ENCODE measurements at regions of chr2 and their contacts with region 1.

Region 1: DNA sequence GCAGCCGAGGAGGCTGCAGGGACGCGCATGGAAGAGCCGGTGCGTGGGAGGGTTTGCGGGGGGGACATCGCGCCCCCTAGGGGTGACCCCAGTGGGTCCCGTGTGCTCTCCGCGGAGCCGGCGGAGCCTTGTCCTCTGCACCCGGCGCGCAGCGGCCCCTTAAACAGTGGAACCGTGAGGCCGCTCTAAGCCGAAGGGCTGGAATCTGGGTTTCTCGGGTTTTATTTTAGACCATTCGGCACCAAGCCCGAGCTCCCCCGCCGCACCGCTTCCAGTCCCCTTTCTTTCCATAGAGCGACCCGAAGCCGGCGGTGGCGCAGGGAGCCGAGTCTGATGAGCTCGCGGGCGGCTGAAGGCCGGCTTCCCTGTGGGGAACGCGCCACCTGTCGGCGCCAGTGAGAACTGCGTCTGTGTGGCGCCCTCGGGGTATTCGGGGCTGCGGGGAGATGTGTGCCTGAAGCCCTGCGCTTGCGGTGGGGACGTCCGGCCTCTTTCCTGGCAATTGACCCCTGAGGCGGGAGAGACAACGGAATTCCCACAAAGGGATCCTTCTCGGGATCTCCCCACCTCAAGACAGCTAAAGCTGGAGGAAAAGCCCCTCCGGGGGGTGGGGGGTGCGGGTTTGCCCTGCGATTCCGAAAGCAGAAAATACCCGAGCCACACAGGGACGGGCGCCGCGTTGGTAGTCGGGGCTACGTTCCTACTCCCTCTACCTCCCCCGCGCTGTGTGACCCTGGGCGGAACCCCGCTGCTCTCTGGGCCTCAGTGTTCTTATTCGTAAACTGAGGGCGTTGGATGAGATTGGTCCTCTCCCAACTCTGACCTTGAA is 8.2 kb upstream of the EN1 start:
- DNase-seq: peak; percentile 94
- ATAC-seq: peak; percentile 54
- H3K4me3 Mint-ChIP-seq: peak overlapping the region; percentile 59
- H3K27ac Mint-ChIP-seq: no peak overlapping the region
- H3K4me1 Mint-ChIP-seq: peaks cover 60% of the 10 kb centered on the region
- H3K27me3 Mint-ChIP-seq: peaks cover 100% of the 10 kb centered on the region
- CTCF ChIP-seq: peak; percentile 97

Region 2: GRCh38 chr2:118371515-118371914 is 484.1 kb before region 1 on chr2:
- CTCF ChIA-PET with region 1: interaction called, 10 read pairs
- POLR2A ChIA-PET with region 1: no interaction called
- DNase-seq: peak; percentile 70
- ATAC-seq: peak; percentile 94
- H3K4me3 Mint-ChIP-seq: no peak overlapping the region
- H3K27ac Mint-ChIP-seq: no peak overlapping the region
- H3K4me1 Mint-ChIP-seq: peaks cover 50% of the 10 kb centered on the region
- H3K27me3 Mint-ChIP-seq: no peaks in the 10 kb centered on the region
- CTCF ChIP-seq: peak; percentile 59

Region 3: GRCh38 chr2:118763797-118764196 is 91.9 kb before region 1 on chr2:
- CTCF ChIA-PET with region 1: interaction called, 24 read pairs
- POLR2A ChIA-PET with region 1: no interaction called
- DNase-seq: peak; percentile 40
- ATAC-seq: peak; percentile 96
- H3K4me3 Mint-ChIP-seq: no peak overlapping the region
- H3K27ac Mint-ChIP-seq: no peak overlapping the region
- H3K4me1 Mint-ChIP-seq: peaks cover 13% of the 10 kb centered on the region
- H3K27me3 Mint-ChIP-seq: peaks cover 45% of the 10 kb centered on the region
- CTCF ChIP-seq: no peak

Region 4: DNA sequence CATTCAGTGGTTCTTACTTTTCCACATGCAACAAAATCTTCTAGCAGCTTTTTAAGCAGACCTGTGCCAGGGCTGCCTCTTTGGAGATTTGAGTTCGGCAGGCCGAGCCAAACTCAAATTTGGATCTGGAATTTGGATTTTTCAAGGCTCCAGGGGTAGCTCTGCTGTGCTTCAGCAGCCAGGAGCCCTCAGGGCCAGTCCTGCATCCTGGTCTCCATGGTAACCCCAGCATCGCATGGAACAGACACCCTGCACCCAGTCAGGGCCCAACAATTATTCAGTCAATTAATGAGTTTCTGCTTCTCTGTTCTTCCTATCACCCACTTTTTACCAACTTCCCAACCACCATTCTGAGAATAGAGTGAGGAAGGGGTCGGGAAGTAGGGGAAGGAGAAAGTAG is 38.2 kb before region 1 on chr2:
- CTCF ChIA-PET with region 1: interaction called, 15 read pairs
- POLR2A ChIA-PET with region 1: no interaction called
- DNase-seq: no peak
- ATAC-seq: no peak
- H3K4me3 Mint-ChIP-seq: no peak overlapping the region
- H3K27ac Mint-ChIP-seq: no peak overlapping the region
- H3K4me1 Mint-ChIP-seq: peaks cover 42% of the 10 kb centered on the region
- H3K27me3 Mint-ChIP-seq: peaks cover 15% of the 10 kb centered on the region
- CTCF ChIP-seq: no peak

Region 5: DNA sequence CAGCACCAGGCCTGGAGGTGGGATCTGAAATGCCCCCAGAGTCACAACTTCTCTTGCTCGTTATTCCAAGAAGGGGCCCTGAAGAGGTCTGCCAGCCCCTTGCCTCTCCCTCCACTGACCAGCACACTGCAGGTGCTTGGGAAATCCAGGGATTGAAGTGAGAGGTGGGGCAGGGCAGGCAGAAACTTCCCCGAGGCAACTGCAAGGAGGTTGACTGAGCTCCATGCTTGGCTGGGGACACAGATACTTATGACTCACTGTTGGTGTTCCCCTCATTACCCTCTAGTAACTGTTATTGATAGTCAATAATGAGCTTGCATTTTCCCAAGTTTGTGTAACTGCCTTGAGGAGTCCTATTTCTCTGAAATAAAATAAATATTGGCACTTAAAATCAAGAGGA is 133.8 kb after region 1 on chr2:
- CTCF ChIA-PET with region 1: no interaction called
- POLR2A ChIA-PET with region 1: no interaction called
- DNase-seq: no peak
- ATAC-seq: no peak
- H3K4me3 Mint-ChIP-seq: no peak overlapping the region
- H3K27ac Mint-ChIP-seq: no peak overlapping the region
- H3K4me1 Mint-ChIP-seq: no peaks in the 10 kb centered on the region
- H3K27me3 Mint-ChIP-seq: peaks cover 8% of the 10 kb centered on the region; the same call in 1 of the 2 replicates
- CTCF ChIP-seq: no peak

Measured in WTC11 (cell line).